ENCODE measurements at regions of chr20 and their contacts with region 1.

Region 1: DNA sequence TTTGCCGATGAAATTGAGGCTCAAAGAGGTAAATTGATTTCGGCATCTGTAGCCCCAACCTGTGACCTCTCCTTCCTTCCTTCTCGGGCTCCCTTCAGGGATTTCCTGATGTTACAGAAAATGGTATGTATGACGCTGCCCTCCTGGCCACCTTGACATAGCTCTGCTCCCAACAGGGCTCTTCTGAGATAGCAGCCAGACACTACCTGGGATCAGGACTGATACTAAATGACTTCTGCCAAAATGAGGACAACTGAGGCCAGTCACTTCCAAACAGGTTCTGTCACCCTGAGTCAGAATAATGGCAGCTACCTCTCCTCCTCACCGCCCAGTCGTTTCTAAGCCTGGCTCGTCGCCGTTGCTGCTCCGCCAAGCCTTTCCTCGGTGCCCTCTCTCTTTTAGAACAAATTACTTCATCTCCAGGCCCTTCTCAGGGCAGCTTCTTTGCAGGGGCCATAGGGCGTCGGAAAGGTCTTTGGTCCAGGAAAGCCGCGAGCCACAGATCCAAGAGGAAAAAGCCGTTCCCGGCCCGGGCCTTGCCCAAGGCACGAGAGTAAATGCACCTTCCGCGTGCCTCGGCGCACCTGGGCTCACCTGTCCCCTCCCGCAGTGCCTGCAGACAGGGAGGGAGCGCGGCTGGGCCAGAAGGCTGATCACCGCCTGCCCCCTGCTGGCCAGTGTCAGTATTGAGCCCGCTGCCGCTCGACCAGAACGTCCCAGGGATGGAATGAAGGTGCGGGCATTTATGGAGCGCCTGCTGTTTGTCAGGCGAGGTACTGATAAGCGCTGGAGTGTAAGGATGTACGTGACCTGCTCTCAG is 904 bp upstream of the LPIN3 start:
- DNase-seq: no peak
- H3K4me3 ChIP-seq: peak overlapping the region; percentile 54
- H3K27me3 ChIP-seq: no peaks in the 10 kb centered on the region
- CTCF ChIP-seq: peak; percentile 94

Region 2: DNA sequence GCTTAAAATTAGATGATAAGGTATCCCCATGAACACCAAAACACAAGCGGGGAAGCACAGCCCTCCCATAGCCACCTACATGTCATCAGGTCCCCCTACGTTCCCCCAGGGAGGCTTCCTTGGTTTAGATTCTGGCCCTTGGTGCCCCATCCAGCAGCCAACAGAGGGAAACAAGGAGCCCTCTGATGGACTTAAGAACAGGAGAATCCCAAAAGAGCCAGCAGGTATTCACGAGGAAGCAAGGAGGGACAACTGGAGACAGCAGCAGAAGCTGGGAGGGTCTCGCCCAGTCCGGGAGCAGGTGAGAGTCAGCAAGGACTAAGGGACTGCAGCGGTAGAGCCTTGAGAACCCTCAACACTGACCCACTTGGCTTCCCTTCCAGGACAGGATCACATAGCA is 369.5 kb before region 1 on chr20:
- CTCF ChIA-PET with region 1: interaction called, 10 read pairs
- POLR2A ChIA-PET with region 1: no interaction called
- DNase-seq: no peak
- H3K4me3 ChIP-seq: no peak overlapping the region
- H3K27me3 ChIP-seq: no peaks in the 10 kb centered on the region
- CTCF ChIP-seq: peak; percentile 31

Region 3: GRCh38 chr20:41135187-41135887 is 204.4 kb before region 1 on chr20:
- CTCF ChIA-PET with region 1: interaction called, 17 read pairs
- POLR2A ChIA-PET with region 1: no interaction called
- DNase-seq: no peak
- H3K4me3 ChIP-seq: no peak overlapping the region
- H3K27me3 ChIP-seq: no peaks in the 10 kb centered on the region
- CTCF ChIP-seq: peak; percentile 62

Region 4: DNA sequence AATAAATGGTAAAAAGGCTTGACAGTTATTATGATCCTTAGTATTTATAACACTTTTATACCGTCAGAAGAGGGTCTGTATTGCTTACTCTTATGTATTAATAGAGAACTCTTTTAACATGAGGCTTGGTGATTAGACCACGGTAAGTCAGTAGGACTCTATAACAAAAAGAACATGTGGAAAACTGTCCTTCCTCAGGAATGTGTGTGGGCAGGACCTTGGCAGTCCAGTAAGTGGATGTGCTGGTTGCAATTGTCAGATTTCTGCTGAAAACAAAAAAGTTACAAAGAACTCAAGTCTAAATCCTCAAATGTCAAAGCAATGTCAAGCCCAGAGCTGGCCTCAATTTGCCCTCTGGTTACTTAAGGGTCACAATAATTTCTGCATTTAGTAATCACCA is 121.3 kb before region 1 on chr20:
- CTCF ChIA-PET with region 1: interaction called, 10 read pairs
- POLR2A ChIA-PET with region 1: no interaction called
- DNase-seq: peak; percentile 38
- H3K4me3 ChIP-seq: no peak overlapping the region
- H3K27me3 ChIP-seq: no peaks in the 10 kb centered on the region
- CTCF ChIP-seq: no peak

Region 5: GRCh38 chr20:41317536-41318270 is 22.0 kb before region 1 on chr20 and contains the start of gene ZHX3:
- CTCF ChIA-PET with region 1: interaction called, 11 read pairs
- POLR2A ChIA-PET with region 1: no interaction called
- DNase-seq: peak; percentile 73
- H3K4me3 ChIP-seq: peak within 1 kb of the TSS; percentile 72
- H3K27me3 ChIP-seq: no peaks in the 10 kb centered on the region
- CTCF ChIP-seq: no peak
- polyA plus RNA-seq, gene ZHX3: 23.9 and 27.1 TPM in 2 replicates

Region 6: GRCh38 chr20:41932431-41932830 is 592.7 kb after region 1 on chr20:
- CTCF ChIA-PET with region 1: no interaction called
- POLR2A ChIA-PET with region 1: interaction called, 20 read pairs
- DNase-seq: no peak
- H3K4me3 ChIP-seq: no peak overlapping the region
- H3K27me3 ChIP-seq: no peaks in the 10 kb centered on the region
- CTCF ChIP-seq: no peak

Measured in BJ (cell line).